ENCODE measurements at regions of chr11 and their contacts with region 1.

Region 1: DNA sequence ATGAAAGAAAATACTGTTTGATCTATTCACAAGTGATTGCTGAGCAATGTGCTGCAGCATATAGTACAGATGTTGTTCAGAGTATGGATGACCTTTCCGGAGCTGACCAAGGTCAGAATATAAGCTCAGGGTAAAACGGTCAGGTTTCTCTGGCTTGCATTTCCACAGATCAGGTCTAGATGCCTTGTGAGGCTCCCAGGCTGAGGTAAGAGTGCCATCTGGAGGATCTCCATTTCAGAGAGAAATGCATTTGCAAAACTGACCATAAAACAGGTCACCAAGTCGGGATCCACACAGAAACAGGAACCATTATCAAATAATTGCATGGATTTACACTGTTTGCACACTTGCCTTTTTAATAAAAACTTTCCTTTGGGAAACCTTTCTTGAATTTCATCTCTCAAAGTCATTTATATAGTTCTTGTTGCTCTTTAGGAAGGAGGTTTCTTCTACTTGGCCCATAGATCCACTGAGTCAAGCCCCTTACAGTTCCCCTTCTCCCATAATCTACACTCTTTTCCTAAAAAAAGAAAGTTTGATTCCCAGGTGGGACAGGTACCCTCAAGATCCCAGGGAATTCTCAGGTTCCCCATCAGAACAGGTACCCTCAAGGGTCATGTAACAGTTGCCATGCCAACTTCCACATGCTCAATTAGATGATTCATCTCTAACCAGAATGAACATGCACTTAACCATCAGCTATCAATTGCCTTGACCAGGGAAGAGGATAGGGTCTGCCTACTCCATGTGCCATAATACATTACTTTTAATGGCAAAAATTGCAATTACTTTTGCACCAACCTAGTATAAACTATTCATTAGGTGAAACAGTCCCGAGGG is 25.0 kb upstream of the TMPRSS5 start:
- DNase-seq: no peak
- CTCF ChIP-seq: peak; percentile 49

Region 2: DNA sequence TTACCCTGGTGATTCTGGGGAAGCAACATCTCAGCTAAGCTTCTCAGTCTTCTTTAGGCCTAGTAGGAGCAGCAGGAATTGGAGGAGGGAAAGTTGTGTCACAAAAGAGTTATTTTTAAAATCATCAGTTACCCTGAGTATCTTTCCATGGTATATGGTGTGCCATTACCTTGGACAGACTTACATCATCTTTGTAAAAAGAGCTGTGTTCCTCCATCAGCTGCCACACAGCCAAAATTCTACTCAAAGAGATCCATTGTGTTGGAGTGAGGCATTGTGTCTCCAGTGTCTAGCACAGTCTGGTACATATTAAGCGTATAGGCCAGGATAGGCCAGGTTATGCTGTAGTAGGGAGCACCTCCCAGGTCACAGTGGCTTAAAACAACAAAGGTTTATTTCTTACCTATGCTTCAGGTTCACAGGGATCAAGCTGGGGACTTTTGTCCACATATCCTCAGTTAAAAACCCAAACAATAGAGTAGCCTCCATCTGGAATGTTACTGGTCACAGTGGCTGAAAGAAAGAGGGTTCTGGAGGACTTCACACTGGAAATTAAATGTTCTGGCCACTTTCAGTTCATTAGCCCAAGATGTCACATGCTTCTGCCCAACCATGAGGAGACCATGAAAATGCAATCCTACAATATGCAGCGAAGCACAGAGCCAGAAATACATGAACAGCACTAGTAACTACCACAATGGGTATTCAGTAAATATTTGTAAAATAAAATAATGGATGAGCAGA is 15.1 kb before region 1 on chr11:
- CTCF ChIA-PET with region 1: interaction called, 24 read pairs
- POLR2A ChIA-PET with region 1: no interaction called
- DNase-seq: no peak
- CTCF ChIP-seq: no peak